ENCODE measurements at regions of chr7 and their contacts with region 1.

Region 1: DNA sequence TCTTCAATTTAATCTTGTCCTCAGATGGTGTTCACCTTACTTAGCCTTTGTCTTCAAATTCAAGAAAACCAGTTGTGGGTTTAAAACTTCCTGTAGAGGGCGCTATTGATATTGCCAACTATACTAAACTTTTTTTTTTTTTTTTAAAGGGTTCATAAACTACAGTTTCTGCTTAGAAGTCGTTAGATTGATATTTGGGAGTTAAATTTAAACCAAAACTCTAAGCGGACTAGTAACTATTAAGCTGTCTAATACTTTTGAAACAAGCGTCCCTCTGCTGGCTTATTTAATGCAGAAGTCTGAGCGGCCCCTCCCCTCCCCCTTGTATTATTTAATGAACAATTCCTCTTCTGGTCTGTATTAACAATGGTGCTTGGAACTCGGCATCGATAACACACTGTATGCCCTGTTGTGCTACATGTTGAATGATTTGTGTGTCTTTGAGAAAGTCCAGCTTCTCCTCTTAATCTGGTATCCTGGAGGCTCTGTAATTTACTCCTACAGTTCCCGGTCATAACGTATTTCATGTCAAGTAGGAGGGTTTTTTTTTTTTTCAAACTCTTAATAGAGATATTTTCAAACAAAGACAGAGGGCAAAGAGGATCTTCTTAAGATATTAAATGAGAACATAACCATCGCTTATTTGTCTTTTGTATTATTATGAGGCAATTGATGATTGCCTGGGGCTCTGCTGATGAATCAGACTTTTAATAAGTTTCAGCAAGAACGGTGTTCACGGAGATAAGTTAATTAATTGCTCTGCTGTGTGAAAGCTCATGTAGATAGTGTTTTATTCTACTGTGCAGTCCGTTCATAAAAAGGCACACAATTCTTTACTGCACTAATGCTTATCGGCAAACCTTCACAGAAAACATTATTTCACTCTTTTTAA is 22.6 kb upstream of the CREB5 start:
- DNase-seq: no peak
- H3K4me3 ChIP-seq: no peak overlapping the region
- H3K27ac ChIP-seq: no peak overlapping the region
- H3K4me1 ChIP-seq: no peaks in the 10 kb centered on the region
- H3K27me3 ChIP-seq: peaks cover 9% of the 10 kb centered on the region
- CTCF ChIP-seq: peak; percentile 52 to 86 (median 82)
- POLR2A ChIP-seq: no peak

Region 2: DNA sequence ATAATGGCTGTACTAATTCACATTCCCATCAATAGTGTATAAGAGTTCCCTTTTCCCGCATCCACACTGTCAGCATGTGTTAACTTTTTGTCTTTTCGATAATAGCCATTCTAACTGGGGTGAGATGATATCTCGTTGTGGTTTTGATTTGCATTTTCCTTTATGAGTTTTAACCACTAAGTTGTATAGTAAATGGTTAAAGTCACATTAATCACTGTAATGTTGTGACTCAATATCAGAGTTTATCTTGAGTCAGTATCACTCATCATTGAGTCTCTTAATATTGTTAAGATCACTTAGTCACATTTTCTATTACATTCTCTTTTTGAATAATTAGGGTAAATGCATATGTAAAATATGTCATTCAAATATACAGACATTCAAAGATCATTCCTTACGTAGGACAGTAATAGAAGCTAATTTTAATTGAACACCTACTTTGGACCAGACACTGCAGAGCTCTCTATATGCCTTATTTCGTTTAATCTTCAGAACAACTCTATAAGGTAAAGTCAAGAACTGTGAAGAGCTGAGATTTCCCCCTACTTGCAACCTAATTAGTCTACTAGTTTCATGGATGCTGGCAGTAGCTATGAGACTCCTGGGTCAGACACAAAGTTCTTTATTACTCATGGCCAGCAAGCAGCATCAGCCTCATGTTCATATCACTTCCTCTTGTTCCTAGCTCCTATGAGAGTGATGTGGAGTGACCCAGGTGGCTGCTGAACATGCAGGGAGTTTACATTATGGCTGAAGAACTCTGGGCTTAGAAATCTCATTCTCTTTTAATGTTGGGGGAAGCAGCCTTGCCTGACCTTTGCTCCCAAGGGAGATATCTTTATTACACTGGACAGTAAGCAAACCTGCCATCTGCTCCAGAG is 53.0 kb after region 1 on chr7:
- intact Hi-C with region 1: no loop called
- DNase-seq: no peak
- H3K4me3 ChIP-seq: no peak overlapping the region
- H3K27ac ChIP-seq: no peak overlapping the region
- H3K4me1 ChIP-seq: no peaks in the 10 kb centered on the region
- H3K27me3 ChIP-seq: peaks cover 4% of the 10 kb centered on the region
- CTCF ChIP-seq: no peak
- POLR2A ChIP-seq: no peak

Region 3: GRCh38 chr7:28623863-28624262 is 234.1 kb after region 1 on chr7:
- intact Hi-C with region 1: loop called in 1 of 2 experiments (anchors 5 kb)
- DNase-seq: no peak
- H3K4me3 ChIP-seq: no peak overlapping the region
- H3K27ac ChIP-seq: no peak overlapping the region
- H3K4me1 ChIP-seq: no peaks in the 10 kb centered on the region
- H3K27me3 ChIP-seq: no peaks in the 10 kb centered on the region
- CTCF ChIP-seq: peak in 1 of 6 experiments; percentile 24
- POLR2A ChIP-seq: no peak

Region 4: GRCh38 chr7:28840592-28840995 is 450.8 kb after region 1 on chr7:
- intact Hi-C with region 1: loop called in 1 of 2 experiments (anchors 10 kb)
- DNase-seq: no peak
- H3K4me3 ChIP-seq: no peak overlapping the region
- H3K27ac ChIP-seq: no peak overlapping the region
- H3K4me1 ChIP-seq: no peaks in the 10 kb centered on the region
- H3K27me3 ChIP-seq: peaks cover 8% of the 10 kb centered on the region
- CTCF ChIP-seq: peak in 4 of 6 experiments; percentile 8 to 37 (median 24)
- POLR2A ChIP-seq: no peak

Region 5: GRCh38 chr7:28853834-28854749 is 464.3 kb after region 1 on chr7:
- intact Hi-C with region 1: loop called (anchors 5 to 10 kb)
- DNase-seq: peak; percentile 52 to 88 (median 71)
- H3K4me3 ChIP-seq: peak overlapping the region in 2 of 4 donors; percentile 16 to 56
- H3K27ac ChIP-seq: no peak overlapping the region
- H3K4me1 ChIP-seq: peaks cover 5 to 11% of the 10 kb centered on the region in 2 donors
- H3K27me3 ChIP-seq: peaks cover 32% of the 10 kb centered on the region
- CTCF ChIP-seq: peak; percentile 66 to 89 (median 79)
- POLR2A ChIP-seq: no peak